Endothelial cell of umbilical vein (primary cell): ENCODE measurements at regions of chr2 and their contacts with region 1.

Region 1: GRCh38 chr2:120520929-120521912 is 175.3 kb downstream of the INHBB start:
- DNase-seq: peak; percentile 50
- H3K4me3 ChIP-seq: no peak overlapping the region
- H3K27ac ChIP-seq: no peak overlapping the region
- H3K4me1 ChIP-seq: no peaks in the 10 kb centered on the region
- H3K27me3 ChIP-seq: peaks cover 35 to 57% of the 10 kb centered on the region in 2 experiments
- CTCF ChIP-seq: peak; percentile 95 to 96
- POLR2A ChIP-seq: no peak

Region 2: DNA sequence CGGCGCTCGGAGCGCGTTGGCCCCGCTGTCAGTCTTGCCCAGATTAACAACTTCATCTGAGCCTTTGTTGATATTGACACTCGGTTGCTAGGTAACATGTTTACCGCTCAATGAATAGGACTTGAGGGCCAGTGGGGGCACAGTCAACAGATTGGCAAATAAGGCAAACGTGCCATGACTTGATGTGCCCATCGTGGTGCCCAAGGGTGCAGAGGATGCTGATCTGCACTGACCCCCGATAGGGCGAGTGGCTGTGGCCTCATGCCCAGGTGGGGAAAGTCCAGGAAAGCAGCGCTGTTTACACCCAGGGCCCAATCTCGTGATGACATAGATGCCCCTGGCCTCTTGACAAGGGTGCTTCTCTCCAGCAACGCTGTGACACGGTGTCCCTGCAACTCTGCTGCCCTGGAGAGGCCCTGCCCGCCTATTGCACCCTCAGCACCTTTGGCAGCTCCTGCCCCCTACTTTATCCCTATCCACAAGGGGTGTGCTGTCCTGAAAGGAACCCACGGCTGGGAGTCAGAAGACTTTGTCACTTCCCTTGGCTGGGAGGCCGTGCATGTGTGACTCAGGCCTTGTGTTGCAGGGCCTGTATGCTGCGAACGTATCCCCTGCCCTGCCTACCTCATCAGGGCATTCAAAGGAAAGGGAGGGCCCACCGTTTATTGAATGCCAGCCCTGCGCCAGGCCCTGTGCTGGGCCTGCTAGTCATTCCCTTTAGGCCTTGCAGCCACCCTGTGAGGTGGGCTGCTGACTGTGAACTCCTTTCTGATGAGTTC is 17.2 kb before region 1 on chr2:
- CTCF ChIA-PET with region 1: interaction called, 29 read pairs
- POLR2A ChIA-PET with region 1: no interaction called
- dilution Hi-C with region 1: no loop called
- intact Hi-C with region 1: loop called (anchors 1 kb)
- DNase-seq: peak; percentile 29
- H3K4me3 ChIP-seq: no peak overlapping the region
- H3K27ac ChIP-seq: no peak overlapping the region
- H3K4me1 ChIP-seq: peaks cover 8% of the 10 kb centered on the region
- H3K27me3 ChIP-seq: peaks cover 13 to 38% of the 10 kb centered on the region in 2 experiments
- CTCF ChIP-seq: no peak
- POLR2A ChIP-seq: no peak